Esophagus squamous epithelium (tissue), 5 donors: ENCODE measurements at regions of chr5 and their contacts with region 1.

Region 1: GRCh38 chr5:181181650-181182565 is 23.1 kb downstream of the TRIM7 start:
- DNase-seq: no peak
- H3K4me3 ChIP-seq: no peak overlapping the region
- H3K27ac ChIP-seq: no peak overlapping the region
- H3K4me1 ChIP-seq: peaks cover 3 to 28% (median 22%) of the 10 kb centered on the region in 3 donors
- H3K27me3 ChIP-seq: peaks cover 0 to 16% (median 0%) of the 10 kb centered on the region in 4 donors
- CTCF ChIP-seq: peak; percentile 50 to 87 (median 80)
- POLR2A ChIP-seq: no peak

Region 2: DNA sequence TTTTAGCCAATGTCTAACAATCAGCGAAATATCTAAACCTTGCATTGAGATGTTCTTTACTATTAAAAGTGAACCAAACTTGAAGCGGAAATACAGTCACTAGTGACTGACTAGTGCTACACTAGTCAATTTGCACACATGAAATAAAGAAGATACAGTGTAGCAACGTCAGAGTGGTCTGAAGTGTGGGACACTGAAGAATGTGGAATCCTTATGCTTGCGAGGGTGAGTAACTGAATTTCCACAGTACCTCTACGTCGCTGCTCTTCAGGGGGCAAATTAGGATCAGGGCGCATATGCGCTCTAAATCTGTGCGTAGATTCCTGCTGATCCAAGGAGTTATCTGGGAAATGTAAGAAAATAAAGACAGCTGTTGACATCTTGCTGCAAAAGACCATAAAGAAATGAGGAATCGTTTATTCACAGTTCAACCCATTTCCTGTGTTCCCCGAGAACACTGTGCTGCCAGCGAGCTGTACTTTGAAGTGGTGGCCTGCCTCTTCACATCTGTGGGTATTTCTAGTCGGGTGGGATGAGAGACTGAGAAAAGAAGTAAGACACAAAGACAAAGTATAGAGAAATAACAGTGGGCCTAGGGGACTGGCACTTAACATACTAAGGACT is 492.7 kb before region 1 on chr5:
- intact Hi-C with region 1: no loop called
- DNase-seq: no peak
- H3K4me3 ChIP-seq: no peak overlapping the region
- H3K27ac ChIP-seq: no peak overlapping the region
- H3K4me1 ChIP-seq: no peaks in the 10 kb centered on the region
- H3K27me3 ChIP-seq: peaks cover 0 to 77% (median 0%) of the 10 kb centered on the region in 4 donors
- CTCF ChIP-seq: no peak
- POLR2A ChIP-seq: no peak

Region 3: GRCh38 chr5:181043285-181044092 is 138.4 kb before region 1 on chr5:
- intact Hi-C with region 1: no loop called
- DNase-seq: no peak
- H3K4me3 ChIP-seq: no peak overlapping the region
- H3K27ac ChIP-seq: peak overlapping the region in 2 of 4 donors; percentile 3 to 34
- H3K4me1 ChIP-seq: no peaks in the 10 kb centered on the region
- H3K27me3 ChIP-seq: peaks cover 0 to 91% (median 1%) of the 10 kb centered on the region in 4 donors
- CTCF ChIP-seq: peak in 1 of 6 experiments; percentile 7
- POLR2A ChIP-seq: no peak

Region 4: DNA sequence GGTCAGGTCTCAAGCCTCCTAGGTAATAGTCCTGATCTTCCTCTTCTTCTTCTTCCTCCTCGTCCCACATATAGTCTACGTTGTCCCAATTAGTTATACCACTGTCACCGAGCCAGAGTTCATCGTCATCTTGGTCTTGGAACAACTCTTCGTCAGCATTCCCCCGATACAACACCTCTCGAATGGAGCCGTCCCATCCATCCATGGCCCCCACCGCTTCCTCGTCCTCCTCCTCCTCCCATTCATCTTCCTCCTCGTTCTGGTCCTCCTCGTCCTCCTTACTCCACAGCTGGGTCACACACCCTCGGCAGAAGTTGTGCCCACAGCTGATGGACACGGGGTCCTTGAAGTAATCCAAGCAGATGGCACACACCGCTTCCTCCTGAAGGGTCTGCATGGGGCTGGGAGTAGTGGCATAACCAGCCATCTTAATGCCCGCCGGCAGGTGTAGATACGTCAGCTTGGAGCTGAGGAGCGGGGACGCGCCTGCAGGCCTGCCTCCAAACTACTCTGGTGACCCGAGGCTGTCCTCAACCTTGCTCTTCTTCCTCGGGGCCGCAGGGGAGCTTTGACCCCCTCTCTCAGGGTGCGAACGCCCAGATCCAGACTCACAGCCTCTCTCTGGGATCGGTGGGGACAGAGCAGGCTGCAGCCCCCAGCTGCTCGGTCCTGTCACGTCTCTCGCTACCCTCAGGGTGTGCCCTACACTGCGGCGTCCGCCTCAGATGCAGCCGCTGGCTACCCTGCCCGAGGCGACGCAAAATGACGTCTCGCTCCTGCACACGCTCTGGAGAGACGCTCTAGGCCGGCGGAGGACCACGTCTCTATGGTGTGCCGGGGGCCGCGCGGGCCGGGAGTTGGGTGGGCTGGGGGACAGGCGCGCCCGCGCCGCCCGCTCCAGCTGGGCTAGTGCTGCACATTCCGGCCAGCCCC is 78.7 kb after region 1 on chr5 and contains the start of gene TRIM52:
- intact Hi-C with region 1: loop called (anchors 10 kb)
- DNase-seq: no peak
- H3K4me3 ChIP-seq: peak within 1 kb of the TSS; percentile 81 to 97 (median 90)
- H3K27ac ChIP-seq: peak within 1 kb of the TSS; percentile 97 to 100 (median 99)
- H3K4me1 ChIP-seq: peaks cover 14 to 60% (median 35%) of the 10 kb centered on the region in 3 donors
- H3K27me3 ChIP-seq: no peaks in the 10 kb centered on the region
- CTCF ChIP-seq: peak in 2 of 6 experiments; percentile 2 to 4
- POLR2A ChIP-seq: peak in 3 of 4 donors; percentile 73 to 87 (median 84)
- total RNA-seq, gene TRIM52: 2.0 to 11.1 (median 3.3) TPM